ENCODE measurements at regions of chr9 and their contacts with region 1.

Region 1: DNA sequence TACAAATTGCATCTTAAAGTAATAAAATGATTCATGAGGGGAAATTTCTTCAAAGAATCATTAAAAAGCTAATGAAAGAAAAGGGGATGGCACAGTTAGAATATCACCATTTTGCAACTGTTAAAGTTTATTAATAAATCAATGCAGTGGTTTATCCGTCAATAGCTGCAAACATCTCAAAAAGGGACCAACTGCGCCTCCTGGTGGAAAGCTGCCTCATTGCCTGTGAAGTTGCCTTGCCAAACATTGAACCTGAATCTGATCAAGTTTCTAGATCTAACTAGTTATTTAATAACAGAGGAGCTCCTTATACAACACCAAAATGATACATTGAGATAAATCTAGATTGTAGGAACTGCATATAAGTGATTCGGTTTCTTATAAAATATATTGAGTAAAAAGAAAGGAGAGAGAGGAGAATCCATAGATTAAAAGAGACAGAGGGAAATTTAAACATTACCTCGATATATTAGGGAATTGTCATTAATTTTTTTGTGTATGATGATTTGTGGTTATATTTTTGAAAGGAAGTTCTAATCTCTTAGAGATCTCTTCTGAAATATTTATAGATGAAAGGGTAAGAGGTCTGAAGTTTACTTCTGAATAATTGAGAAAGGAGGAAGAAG is 6.9 kb upstream of the NDUFB6 start:
- DNase-seq: peak; percentile 73
- H3K4me3 Mint-ChIP-seq: peak overlapping the region; percentile 49
- H3K27ac Mint-ChIP-seq: no peak overlapping the region
- H3K4me1 Mint-ChIP-seq: no peaks in the 10 kb centered on the region
- H3K27me3 Mint-ChIP-seq: no peaks in the 10 kb centered on the region
- CTCF ChIP-seq: peak; percentile 79

Region 2: DNA sequence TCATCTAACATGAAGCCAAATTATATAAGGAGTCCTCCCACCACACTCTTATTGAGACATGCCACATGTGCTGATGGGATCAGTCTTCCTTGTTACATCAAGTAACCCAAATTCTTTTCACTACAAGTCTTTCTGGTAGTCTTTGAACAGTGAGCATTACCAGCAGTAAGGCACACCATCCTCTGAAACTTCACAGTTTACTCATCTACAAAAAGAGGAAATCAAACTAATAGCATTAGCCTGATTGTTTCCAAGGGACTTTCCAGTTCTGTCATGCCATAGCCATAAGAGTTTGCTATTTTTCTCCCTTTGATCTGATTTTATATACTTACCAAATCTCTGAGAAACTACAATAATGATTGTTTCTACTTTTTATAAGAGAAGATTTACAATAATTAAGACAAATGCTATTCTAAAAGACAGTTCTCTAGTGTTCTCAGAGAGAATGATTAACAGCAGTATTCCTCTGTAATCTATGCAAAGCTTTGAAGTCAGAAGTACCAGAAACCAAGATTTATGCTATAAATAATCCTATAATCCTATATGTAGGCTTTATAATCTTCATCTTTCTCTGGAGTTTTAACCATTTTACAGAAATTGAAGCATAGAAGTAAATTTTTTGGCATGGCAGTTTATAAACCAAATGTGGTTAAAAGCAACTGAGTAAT is 361.6 kb before region 1 on chr9:
- CTCF ChIA-PET with region 1: no interaction called
- POLR2A ChIA-PET with region 1: no interaction called
- intact Hi-C with region 1: no loop called
- DNase-seq: no peak
- H3K4me3 Mint-ChIP-seq: no peak overlapping the region
- H3K27ac Mint-ChIP-seq: no peak overlapping the region
- H3K4me1 Mint-ChIP-seq: no peaks in the 10 kb centered on the region
- H3K27me3 Mint-ChIP-seq: peaks cover 39% of the 10 kb centered on the region
- CTCF ChIP-seq: no peak

Region 3: DNA sequence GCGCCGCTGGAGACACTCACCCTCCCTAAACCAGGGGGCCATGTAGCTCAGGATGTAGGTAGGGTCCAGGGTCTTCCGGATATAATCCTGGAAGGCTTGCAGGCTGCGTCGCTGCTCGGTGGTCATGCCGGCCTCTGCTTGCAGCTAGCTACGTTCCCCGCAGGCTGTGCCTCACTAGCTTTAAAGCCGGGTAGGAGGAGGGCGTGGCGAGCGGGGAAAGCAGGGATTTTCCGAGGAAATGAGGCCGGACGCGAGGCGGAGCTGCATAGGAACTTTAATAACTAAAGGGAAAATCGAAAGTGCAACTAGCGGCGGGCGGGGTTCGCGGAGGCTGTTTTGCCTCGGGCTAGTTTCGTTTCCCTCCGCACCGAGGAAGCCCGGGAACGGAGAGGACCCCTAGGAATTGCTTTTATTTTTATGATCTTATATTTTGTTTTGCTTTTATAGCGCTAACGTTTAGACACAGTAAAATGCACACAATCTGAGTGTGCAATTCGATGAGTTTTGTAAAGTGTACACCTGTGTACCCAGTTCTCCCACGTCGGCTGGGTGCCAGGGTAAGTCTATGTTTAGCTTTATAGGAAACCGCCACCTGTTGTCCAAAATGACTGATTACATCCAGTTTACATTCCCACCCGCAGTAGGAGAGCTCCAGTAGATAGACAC is 53.6 kb before region 1 on chr9 and contains the start of gene RIGI:
- CTCF ChIA-PET with region 1: interaction called, 29 read pairs
- POLR2A ChIA-PET with region 1: interaction called, 9 read pairs
- intact Hi-C with region 1: no loop called
- DNase-seq: peak; percentile 96
- H3K4me3 Mint-ChIP-seq: peak within 1 kb of the TSS; percentile 82
- H3K27ac Mint-ChIP-seq: peak within 1 kb of the TSS; percentile 62
- H3K4me1 Mint-ChIP-seq: peaks cover 30% of the 10 kb centered on the region
- H3K27me3 Mint-ChIP-seq: no peaks in the 10 kb centered on the region
- CTCF ChIP-seq: peak; percentile 64
- total RNA-seq, gene RIGI: 3.0 and 3.2 TPM in 2 replicates

Region 4: DNA sequence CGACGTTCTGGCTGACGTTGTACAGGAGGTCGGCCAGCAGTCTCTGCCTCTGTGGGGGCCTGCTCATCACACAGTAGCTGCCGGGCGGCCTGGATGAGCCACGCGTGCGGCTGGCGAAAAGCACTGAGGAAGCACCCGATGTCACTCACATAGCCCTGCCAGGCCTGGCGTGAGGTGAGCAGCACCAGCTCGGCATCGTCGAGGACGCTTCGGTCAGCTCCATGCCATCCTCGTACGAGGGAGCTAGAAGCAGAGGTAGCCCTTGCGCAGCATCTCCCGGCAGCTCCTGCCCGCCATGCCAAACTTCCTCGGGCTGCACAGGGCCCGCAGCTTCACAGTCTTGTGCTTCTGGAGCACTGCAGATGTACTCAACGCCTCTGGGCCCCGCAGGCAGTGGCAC is 13.0 kb before region 1 on chr9:
- CTCF ChIA-PET with region 1: interaction called, 44 read pairs
- POLR2A ChIA-PET with region 1: no interaction called
- intact Hi-C with region 1: no loop called
- DNase-seq: no peak
- H3K4me3 Mint-ChIP-seq: no peak overlapping the region
- H3K27ac Mint-ChIP-seq: no peak overlapping the region
- H3K4me1 Mint-ChIP-seq: peaks cover 6% of the 10 kb centered on the region
- H3K27me3 Mint-ChIP-seq: no peaks in the 10 kb centered on the region
- CTCF ChIP-seq: no peak

Region 5: DNA sequence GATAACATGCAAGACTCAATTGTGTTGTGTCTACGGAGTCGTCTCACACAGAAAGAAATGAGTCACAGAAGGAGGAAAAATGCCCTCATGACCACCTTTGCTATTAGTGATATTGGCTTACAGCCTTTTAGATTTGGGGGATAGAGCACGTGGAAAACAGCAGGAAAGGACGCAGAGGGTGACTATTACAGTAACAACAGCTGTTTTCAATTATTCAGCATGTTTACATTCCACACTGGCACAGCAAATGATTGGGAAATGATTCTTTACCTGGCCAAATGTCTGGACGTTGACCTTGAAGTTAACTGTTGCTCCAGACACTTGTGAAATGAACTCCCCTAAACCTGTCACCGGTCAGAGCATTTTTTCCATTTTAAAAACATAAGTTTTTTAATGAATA is 374.8 kb after region 1 on chr9:
- CTCF ChIA-PET with region 1: interaction called, 30 read pairs
- POLR2A ChIA-PET with region 1: no interaction called
- intact Hi-C with region 1: no loop called
- DNase-seq: peak; percentile 20
- H3K4me3 Mint-ChIP-seq: no peak overlapping the region
- H3K27ac Mint-ChIP-seq: no peak overlapping the region
- H3K4me1 Mint-ChIP-seq: peaks cover 6% of the 10 kb centered on the region
- H3K27me3 Mint-ChIP-seq: no peaks in the 10 kb centered on the region
- CTCF ChIP-seq: no peak

Region 6: GRCh38 chr9:32978051-32978450 is 398.2 kb after region 1 on chr9:
- CTCF ChIA-PET with region 1: interaction called, 264 read pairs
- POLR2A ChIA-PET with region 1: no interaction called
- intact Hi-C with region 1: no loop called
- DNase-seq: no peak
- H3K4me3 Mint-ChIP-seq: no peak overlapping the region
- H3K27ac Mint-ChIP-seq: peak overlapping the region; percentile 23
- H3K4me1 Mint-ChIP-seq: no peaks in the 10 kb centered on the region
- H3K27me3 Mint-ChIP-seq: no peaks in the 10 kb centered on the region
- CTCF ChIP-seq: no peak

Region 7: DNA sequence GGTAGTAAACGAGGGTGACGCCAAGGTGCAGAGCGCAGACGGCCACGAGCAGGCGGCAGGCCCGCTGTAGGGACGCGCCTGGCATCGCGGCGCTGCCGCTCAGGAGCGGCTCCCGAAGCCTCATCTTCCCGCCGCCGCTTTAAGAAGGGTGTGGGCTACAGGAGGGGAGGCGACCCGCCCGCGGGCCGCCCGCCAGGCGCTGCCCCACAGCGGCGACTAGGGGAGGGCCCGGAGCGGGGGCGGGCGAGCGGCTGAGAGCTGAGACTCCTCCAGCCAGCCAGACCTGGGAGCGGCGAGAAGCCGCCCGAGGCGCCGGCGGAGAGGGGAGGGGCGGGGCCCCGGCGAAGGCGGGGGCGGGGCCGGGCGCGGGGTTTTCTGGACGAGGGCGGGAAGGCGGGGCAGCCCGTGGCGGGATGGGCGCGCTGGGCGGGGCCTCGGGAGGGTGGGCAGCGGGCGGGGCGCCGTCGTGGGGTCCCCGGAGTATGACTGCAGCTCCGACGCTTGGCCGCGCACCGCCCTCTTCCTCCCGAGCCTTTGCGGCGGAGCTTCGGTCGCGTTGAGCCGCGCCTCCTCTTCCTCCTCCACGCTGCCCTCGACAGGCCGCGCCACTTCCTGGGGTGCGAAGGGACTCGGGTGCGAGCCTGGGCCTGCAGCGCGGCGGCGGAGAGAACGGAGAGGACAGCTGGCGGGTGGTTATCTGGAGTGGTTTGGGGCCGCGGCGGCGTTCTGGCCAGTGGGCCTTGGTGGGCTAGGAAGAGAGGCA is 587.4 kb after region 1 on chr9 and contains the start of gene B4GALT1:
- CTCF ChIA-PET with region 1: no interaction called
- POLR2A ChIA-PET with region 1: no interaction called
- intact Hi-C with region 1: no loop called
- DNase-seq: peak; percentile 96
- H3K4me3 Mint-ChIP-seq: peak within 1 kb of the TSS; percentile 96
- H3K27ac Mint-ChIP-seq: peak within 1 kb of the TSS; percentile 89
- H3K4me1 Mint-ChIP-seq: peaks cover 52% of the 10 kb centered on the region
- H3K27me3 Mint-ChIP-seq: no peaks in the 10 kb centered on the region
- CTCF ChIP-seq: no peak
- total RNA-seq, gene B4GALT1: 155 and 184 TPM in 2 replicates